Mammary epithelial cell (primary cell): ENCODE measurements at regions of chr7 and their contacts with region 1.

Region 1: GRCh38 chr7:2477447-2478398 is 1.5 kb upstream of the GRIFIN start:
- DNase-seq: peak; percentile 35
- H3K4me3 ChIP-seq: no peak overlapping the region
- H3K27ac ChIP-seq: no peak overlapping the region
- H3K4me1 ChIP-seq: peaks cover 16% of the 10 kb centered on the region
- H3K27me3 ChIP-seq: no peaks in the 10 kb centered on the region
- CTCF ChIP-seq: peak; percentile 60 to 85

Region 2: DNA sequence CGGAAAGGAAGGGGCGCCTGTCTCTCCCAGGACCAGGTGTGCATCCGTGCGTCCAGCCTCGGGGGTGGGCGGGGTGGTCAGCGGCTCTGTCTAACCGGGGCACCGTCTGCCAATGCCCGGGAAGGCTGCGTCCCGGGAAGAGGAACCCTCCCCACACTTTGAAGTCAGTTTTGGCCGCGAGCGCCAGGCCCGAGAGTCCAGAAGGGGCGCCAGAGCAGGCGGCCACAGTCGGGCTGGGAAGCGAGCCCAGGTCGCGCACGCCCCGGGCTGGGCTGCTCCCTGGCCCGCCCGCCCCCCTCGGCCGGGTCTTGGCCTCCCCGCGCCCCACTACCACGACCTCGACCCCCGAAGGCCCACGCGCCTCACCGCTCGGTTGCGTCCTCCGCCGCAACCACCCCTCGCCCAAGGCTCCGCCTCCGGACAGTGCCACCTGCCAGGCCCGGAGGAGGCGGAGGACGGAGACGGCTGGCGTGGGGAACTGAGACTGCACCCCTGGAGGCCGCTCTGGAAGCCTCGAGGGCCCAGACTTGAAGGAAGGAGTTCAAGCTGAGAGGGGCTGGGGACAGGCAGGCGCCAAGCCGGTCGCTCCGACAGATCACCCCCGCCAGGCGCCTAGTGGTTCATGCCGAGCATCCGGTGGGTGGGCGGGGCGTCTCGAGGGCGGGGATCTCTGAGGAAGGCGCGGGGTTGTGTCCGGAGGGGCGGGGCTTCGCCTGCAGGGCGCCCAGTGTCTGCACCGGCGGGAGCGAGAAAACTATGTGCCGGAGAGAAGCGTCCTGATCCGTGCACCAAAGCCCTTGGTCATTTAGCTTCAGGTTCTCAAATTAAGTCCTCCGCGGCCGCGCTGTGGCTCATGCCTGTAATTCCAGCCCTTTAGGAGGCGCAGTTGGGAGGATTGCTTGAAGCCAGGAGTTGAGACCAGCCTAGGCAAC is 77.7 kb after region 1 on chr7 and contains the start of gene BRAT1:
- CTCF ChIA-PET with region 1: no interaction called
- dilution Hi-C with region 1: no loop called
- in situ Hi-C with region 1: no loop called
- intact Hi-C with region 1: loop called (anchors 2 kb)
- DNase-seq: peak; percentile 88
- H3K4me3 ChIP-seq: peak within 1 kb of the TSS; percentile 82 to 97 (median 91)
- H3K27ac ChIP-seq: peak within 1 kb of the TSS; percentile 97
- H3K4me1 ChIP-seq: peaks cover 10% of the 10 kb centered on the region
- H3K27me3 ChIP-seq: no peaks in the 10 kb centered on the region
- CTCF ChIP-seq: peak; percentile 23 to 57
- total RNA-seq, gene BRAT1: 20.5 to 25.3 TPM

Region 3: DNA sequence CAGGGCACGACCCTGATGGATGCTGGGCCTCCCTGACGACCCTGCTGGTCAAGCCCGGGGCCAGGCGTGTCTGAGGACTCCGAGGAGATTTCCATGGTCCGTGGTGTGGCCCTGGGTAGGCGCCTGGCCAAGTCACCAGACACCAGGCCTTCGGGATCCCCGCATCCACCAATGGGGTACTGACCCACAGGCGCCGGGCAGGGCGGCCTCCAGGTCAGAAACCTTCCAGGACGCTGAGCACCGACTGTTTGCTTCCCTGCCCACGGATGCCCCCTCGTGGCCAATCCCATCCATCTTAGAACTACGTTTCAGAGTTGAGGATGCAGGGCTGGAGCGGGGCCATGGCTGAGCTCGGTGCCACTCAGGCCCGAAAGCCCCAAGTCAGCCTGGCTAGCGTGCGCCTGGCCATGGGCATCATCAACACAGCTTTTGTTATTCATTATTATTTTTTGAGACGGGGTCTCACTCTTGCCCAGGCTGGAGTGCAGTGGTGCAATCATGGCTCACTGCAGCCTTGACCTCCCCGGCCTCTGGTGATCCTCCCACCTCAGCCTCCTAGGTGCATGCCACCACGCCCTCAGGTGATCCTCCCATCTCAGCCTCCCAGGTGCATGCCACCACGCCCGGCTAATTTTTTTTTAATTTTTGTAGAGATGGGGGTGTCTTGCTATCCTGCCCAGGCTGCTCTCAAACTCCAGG is 203.2 kb after region 1 on chr7:
- CTCF ChIA-PET with region 1: no interaction called
- dilution Hi-C with region 1: no loop called
- in situ Hi-C with region 1: loop called in 1 of 2 experiments (anchors 25 kb)
- intact Hi-C with region 1: loop called (anchors 1 kb)
- DNase-seq: peak; percentile 46
- H3K4me3 ChIP-seq: no peak overlapping the region
- H3K27ac ChIP-seq: no peak overlapping the region
- H3K4me1 ChIP-seq: no peaks in the 10 kb centered on the region
- H3K27me3 ChIP-seq: peaks cover 6% of the 10 kb centered on the region
- CTCF ChIP-seq: peak; percentile 70 to 81